CD4-positive, alpha-beta memory T cell (primary cell): ENCODE measurements at regions of chr3 and their contacts with region 1.

Region 1: GRCh38 chr3:132722164-132723024 is at the start of gene NPHP3:
- DNase-seq: peak; percentile 87 to 95 (median 91)
- H3K4me3 ChIP-seq: peak within 1 kb of the TSS; percentile 44 to 81
- H3K4me3 Mint-ChIP-seq: peak within 1 kb of the TSS; percentile 90 to 96 (median 92)
- H3K27ac ChIP-seq: peak within 1 kb of the TSS; percentile 80
- H3K27ac Mint-ChIP-seq: peak within 1 kb of the TSS; percentile 79 to 94 (median 91)
- H3K4me1 ChIP-seq: peaks cover 30% of the 10 kb centered on the region
- H3K4me1 Mint-ChIP-seq: peaks cover 29 to 49% (median 41%) of the 10 kb centered on the region in 4 donors
- H3K27me3 ChIP-seq: no peaks in the 10 kb centered on the region
- H3K27me3 Mint-ChIP-seq: peaks cover 0 to 1% of the 10 kb centered on the region in 2 donors
- total RNA-seq, gene NPHP3: 68.0 to 72.9 TPM

Region 2: GRCh38 chr3:130746246-130747039 is 1976.0 kb before region 1 on chr3 and contains the start of gene PIK3R4:
- CTCF ChIA-PET with region 1: no interaction called
- POLR2A ChIA-PET with region 1: no interaction called
- intact Hi-C with region 1: loop called (anchors 2 kb)
- DNase-seq: peak; percentile 93 to 99 (median 95)
- H3K4me3 ChIP-seq: peak within 1 kb of the TSS; percentile 99 to 100
- H3K4me3 Mint-ChIP-seq: peak within 1 kb of the TSS; percentile 90 to 95 (median 92)
- H3K27ac ChIP-seq: peak within 1 kb of the TSS; percentile 91
- H3K27ac Mint-ChIP-seq: peak within 1 kb of the TSS in 6 of 7 donors; percentile 97 to 99 (median 98)
- H3K4me1 ChIP-seq: peaks cover 47% of the 10 kb centered on the region
- H3K4me1 Mint-ChIP-seq: peaks cover 33 to 59% (median 49%) of the 10 kb centered on the region in 4 donors
- H3K27me3 ChIP-seq: no peaks in the 10 kb centered on the region
- H3K27me3 Mint-ChIP-seq: peaks cover 0 to 3% of the 10 kb centered on the region in 2 donors
- total RNA-seq, gene PIK3R4: 29.1 to 33.2 TPM

Region 3: GRCh38 chr3:131381444-131382291 is 1340.7 kb before region 1 on chr3 and contains the start of gene NUDT16:
- CTCF ChIA-PET with region 1: no interaction called
- POLR2A ChIA-PET with region 1: no interaction called
- intact Hi-C with region 1: loop called (anchors 5 kb)
- DNase-seq: peak; percentile 92 to 96 (median 94)
- H3K4me3 ChIP-seq: peak within 1 kb of the TSS; percentile 89 to 95
- H3K4me3 Mint-ChIP-seq: peak within 1 kb of the TSS; percentile 96 to 98 (median 96)
- H3K27ac ChIP-seq: peak within 1 kb of the TSS; percentile 61
- H3K27ac Mint-ChIP-seq: peak within 1 kb of the TSS; percentile 90 to 99 (median 96)
- H3K4me1 ChIP-seq: peaks cover 28% of the 10 kb centered on the region
- H3K4me1 Mint-ChIP-seq: peaks cover 33 to 43% (median 38%) of the 10 kb centered on the region in 4 donors
- H3K27me3 ChIP-seq: no peaks in the 10 kb centered on the region
- H3K27me3 Mint-ChIP-seq: no peaks in the 10 kb centered on the region
- total RNA-seq, gene NUDT16: 15.6 to 16.7 TPM

Region 4: DNA sequence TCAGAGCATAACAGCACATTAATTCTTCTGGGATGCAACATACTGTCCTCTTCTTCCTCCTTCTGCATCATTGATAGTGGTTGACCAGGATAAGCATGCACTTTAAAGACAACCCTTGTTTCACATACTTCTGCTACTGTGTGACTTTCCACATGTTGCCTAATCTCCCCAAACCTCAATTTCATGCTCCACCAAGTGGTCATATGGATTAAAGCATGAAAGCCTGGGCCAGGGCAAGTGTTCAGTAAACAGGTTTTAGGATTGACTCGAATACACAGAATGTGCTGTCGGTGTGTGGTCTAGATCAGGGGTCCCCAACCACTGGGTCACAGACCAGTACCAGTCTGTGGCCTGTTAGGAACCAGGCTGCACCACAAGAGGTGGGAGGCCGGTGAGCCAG is 655.0 kb after region 1 on chr3:
- CTCF ChIA-PET with region 1: interaction called, 3 read pairs
- POLR2A ChIA-PET with region 1: no interaction called
- intact Hi-C with region 1: loop called (anchors 1 kb)
- DNase-seq: no peak
- H3K4me3 ChIP-seq: no peak overlapping the region
- H3K4me3 Mint-ChIP-seq: no peak overlapping the region
- H3K27ac ChIP-seq: no peak overlapping the region
- H3K27ac Mint-ChIP-seq: no peak overlapping the region
- H3K4me1 ChIP-seq: no peaks in the 10 kb centered on the region
- H3K4me1 Mint-ChIP-seq: no peaks in the 10 kb centered on the region
- H3K27me3 ChIP-seq: no peaks in the 10 kb centered on the region
- H3K27me3 Mint-ChIP-seq: peaks cover 0 to 5% of the 10 kb centered on the region in 2 donors

Region 5: GRCh38 chr3:133506215-133506901 is 784.0 kb after region 1 on chr3:
- CTCF ChIA-PET with region 1: no interaction called
- POLR2A ChIA-PET with region 1: no interaction called
- intact Hi-C with region 1: loop called (anchors 10 kb)
- DNase-seq: peak in 4 of 5 donors; percentile 42 to 60 (median 52)
- H3K4me3 ChIP-seq: peak overlapping the region in 1 of 2 donors; percentile 34
- H3K4me3 Mint-ChIP-seq: peak overlapping the region; percentile 64 to 92 (median 86)
- H3K27ac ChIP-seq: peak overlapping the region; percentile 59
- H3K27ac Mint-ChIP-seq: peak overlapping the region; percentile 81 to 98 (median 94)
- H3K4me1 ChIP-seq: peaks cover 16% of the 10 kb centered on the region
- H3K4me1 Mint-ChIP-seq: peaks cover 12 to 15% (median 13%) of the 10 kb centered on the region in 4 donors
- H3K27me3 ChIP-seq: no peaks in the 10 kb centered on the region
- H3K27me3 Mint-ChIP-seq: no peaks in the 10 kb centered on the region

Region 6: GRCh38 chr3:133805527-133806475 is 1083.4 kb after region 1 on chr3 and contains the start of gene SRPRB:
- CTCF ChIA-PET with region 1: no interaction called
- POLR2A ChIA-PET with region 1: no interaction called
- intact Hi-C with region 1: loop called (anchors 1 kb)
- DNase-seq: peak; percentile 93 to 98 (median 96)
- H3K4me3 ChIP-seq: peak within 1 kb of the TSS; percentile 57 to 85
- H3K4me3 Mint-ChIP-seq: peak within 1 kb of the TSS; percentile 94 to 98 (median 98)
- H3K27ac ChIP-seq: peak within 1 kb of the TSS; percentile 65
- H3K27ac Mint-ChIP-seq: peak within 1 kb of the TSS; percentile 92 to 98 (median 95)
- H3K4me1 ChIP-seq: peaks cover 29% of the 10 kb centered on the region
- H3K4me1 Mint-ChIP-seq: peaks cover 20 to 46% (median 29%) of the 10 kb centered on the region in 4 donors
- H3K27me3 ChIP-seq: no peaks in the 10 kb centered on the region
- H3K27me3 Mint-ChIP-seq: peaks cover 0 to 5% of the 10 kb centered on the region in 2 donors
- total RNA-seq, gene SRPRB: 45.6 to 49.8 TPM

Region 7: DNA sequence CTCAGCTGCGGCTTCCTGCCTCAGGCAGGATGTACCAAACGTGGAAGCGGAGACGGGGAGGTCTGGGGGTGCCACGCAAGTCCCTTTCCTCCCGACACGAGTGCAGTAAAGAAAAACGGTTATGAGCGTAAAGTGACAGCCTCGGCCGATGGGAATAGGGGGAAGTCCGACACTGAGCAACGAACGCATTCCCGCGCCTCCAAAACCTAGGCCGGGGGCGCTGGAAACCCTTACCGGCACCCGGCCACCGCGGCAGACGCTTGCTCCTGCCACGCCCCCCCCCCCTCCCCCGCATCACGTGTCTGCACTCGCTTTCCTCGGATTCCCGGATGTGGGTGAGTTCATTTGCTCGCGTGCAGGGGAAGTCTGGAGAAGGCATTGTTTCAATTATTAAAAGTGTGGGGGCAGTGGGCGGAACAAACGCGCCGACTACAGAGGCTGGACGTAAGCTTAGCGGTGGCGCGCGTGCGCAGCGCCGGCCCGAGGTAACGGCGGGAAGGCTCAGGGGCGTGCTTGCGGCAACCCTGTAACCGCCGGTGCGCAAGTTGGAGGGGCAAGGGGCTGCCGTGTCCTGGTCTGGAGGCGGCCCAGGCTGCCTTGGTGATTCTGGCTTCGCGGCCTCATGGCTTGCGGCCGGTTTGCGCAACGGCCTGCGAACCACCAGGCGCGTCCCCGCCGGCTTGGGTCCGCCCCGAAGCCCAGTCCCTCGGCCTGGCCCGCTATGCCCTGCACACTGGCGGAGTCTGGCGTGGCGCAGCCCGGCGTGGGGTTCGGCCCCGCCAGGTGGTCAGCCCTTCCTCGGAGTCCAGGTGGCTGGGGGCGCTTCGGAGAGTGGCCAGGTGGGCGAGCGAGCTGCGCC is 1763.6 kb after region 1 on chr3 and contains the starts of genes ANAPC13 and CEP63:
- CTCF ChIA-PET with region 1: interaction called, 3 read pairs
- POLR2A ChIA-PET with region 1: interaction called, 3 read pairs
- intact Hi-C with region 1: loop called (anchors 1 kb)
- DNase-seq: peak; percentile 95 to 98 (median 96)
- H3K4me3 ChIP-seq: peak within 1 kb of the TSS; percentile 92 to 95
- H3K4me3 Mint-ChIP-seq: peak within 1 kb of the TSS; percentile 94 to 100 (median 99)
- H3K27ac ChIP-seq: peak within 1 kb of the TSS; percentile 88
- H3K27ac Mint-ChIP-seq: peak within 1 kb of the TSS; percentile 97 to 100 (median 99)
- H3K4me1 ChIP-seq: peaks cover 31% of the 10 kb centered on the region
- H3K4me1 Mint-ChIP-seq: peaks cover 29 to 64% (median 45%) of the 10 kb centered on the region in 4 donors
- H3K27me3 ChIP-seq: no peaks in the 10 kb centered on the region
- H3K27me3 Mint-ChIP-seq: no peaks in the 10 kb centered on the region
- total RNA-seq, gene ANAPC13: 40.9 to 41.1 TPM
- total RNA-seq, gene CEP63: 31.6 to 40.1 TPM